CD14-positive monocyte (primary cell): ENCODE measurements at regions of chr5 and their contacts with region 1.

Region 1: DNA sequence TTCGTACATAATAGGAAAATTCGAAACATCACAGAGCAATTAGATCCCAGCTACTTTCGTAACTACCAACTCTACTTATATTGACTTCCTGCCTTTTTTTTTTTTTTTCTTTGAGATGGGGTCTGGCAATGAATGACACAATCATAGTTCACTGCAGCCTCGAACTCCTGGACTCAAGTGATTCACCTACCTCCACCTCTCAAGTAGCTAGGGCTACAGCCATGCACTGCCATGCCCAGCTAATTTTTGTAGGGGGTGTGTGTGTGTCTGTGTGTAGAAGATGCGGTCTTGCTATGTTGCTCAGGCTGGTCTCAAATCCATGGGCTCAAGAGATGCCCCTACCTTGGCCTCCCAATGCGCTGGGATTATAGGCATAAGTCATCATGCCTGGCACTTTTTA is 5.8 kb upstream of the PAIP2 start:
- DNase-seq: no peak
- H3K4me3 ChIP-seq: no peak overlapping the region
- H3K4me3 Mint-ChIP-seq: no peak overlapping the region
- H3K27ac ChIP-seq: no peak overlapping the region
- H3K27ac Mint-ChIP-seq: no peak overlapping the region
- H3K4me1 ChIP-seq: peaks cover under 1 to 2% of the 10 kb centered on the region in 2 donors
- H3K4me1 Mint-ChIP-seq: peaks cover 3% of the 10 kb centered on the region
- H3K27me3 ChIP-seq: no peaks in the 10 kb centered on the region
- H3K27me3 Mint-ChIP-seq: peaks cover 3 to 7% (median 4%) of the 10 kb centered on the region in 3 donors
- CTCF ChIP-seq: no peak

Region 2: GRCh38 chr5:139301808-139302499 is 33.9 kb before region 1 on chr5:
- intact Hi-C with region 1: loop called (anchors 5 kb)
- DNase-seq: no peak
- H3K4me3 ChIP-seq: no peak overlapping the region
- H3K4me3 Mint-ChIP-seq: no peak overlapping the region
- H3K27ac ChIP-seq: peak overlapping the region in 1 of 2 donors; percentile 11
- H3K27ac Mint-ChIP-seq: peak overlapping the region in 5 of 7 donors; percentile 11 to 67 (median 61)
- H3K4me1 ChIP-seq: peaks cover 0 to 2% of the 10 kb centered on the region in 2 donors
- H3K4me1 Mint-ChIP-seq: peaks cover 61% of the 10 kb centered on the region
- H3K27me3 ChIP-seq: no peaks in the 10 kb centered on the region
- H3K27me3 Mint-ChIP-seq: no peaks in the 10 kb centered on the region
- CTCF ChIP-seq: no peak

Region 3: GRCh38 chr5:139368613-139369012 is 32.8 kb after region 1 on chr5:
- intact Hi-C with region 1: no loop called
- DNase-seq: no peak
- H3K4me3 ChIP-seq: no peak overlapping the region
- H3K4me3 Mint-ChIP-seq: no peak overlapping the region
- H3K27ac ChIP-seq: no peak overlapping the region
- H3K27ac Mint-ChIP-seq: peak overlapping the region in 1 of 7 donors; percentile 41
- H3K4me1 ChIP-seq: no peaks in the 10 kb centered on the region
- H3K4me1 Mint-ChIP-seq: no peaks in the 10 kb centered on the region
- H3K27me3 ChIP-seq: no peaks in the 10 kb centered on the region
- H3K27me3 Mint-ChIP-seq: no peaks in the 10 kb centered on the region
- CTCF ChIP-seq: no peak